KBM-7 (cell line): ENCODE measurements at regions of chr12 and their contacts with region 1.

Region 1: GRCh38 chr12:1939801-1940607 is 21.6 kb upstream of the CACNA2D4 start:
- DNase-seq: peak; percentile 90

Region 2: DNA sequence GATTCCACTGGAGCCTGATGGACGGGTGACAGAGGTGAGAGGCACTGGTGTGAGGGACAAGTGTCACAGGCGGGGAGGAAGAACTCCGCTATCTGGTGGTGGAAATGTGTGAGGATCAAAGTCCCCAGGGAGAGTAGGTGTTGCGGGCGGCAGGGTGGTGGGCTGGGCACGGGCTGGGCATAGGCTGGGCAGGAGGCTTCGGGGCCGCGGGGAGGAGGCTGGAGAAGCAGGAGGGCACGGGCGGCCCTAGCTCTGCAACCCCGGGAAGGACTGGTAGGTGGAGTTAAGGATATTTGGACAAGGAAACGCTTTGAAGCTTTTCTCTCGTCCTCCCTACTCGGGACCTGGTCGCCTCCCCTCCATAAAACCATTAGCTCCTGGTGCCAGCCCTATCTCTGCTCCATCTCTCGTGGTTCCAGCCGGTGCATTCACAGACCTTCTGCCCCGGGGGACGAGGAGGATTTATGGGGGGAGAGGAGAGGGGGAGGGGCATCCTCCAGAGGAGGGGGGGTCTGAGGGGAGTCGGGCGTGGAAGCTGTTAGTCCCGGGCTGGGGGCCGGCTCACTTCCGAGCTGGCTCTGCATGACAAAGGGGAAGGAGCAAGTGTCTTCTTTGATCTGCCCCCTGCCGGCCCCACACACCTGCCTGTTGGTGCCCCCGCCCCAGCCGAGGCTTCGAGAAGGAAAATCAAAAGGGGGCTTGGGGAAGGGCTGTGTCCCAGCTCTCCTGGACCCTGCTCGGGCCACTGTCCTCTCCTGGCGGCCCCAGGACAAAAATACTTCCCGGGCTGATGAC is 310.5 kb before region 1 on chr12:
- in situ Hi-C with region 1: loop called (anchors 10 kb)
- DNase-seq: no peak

Region 3: DNA sequence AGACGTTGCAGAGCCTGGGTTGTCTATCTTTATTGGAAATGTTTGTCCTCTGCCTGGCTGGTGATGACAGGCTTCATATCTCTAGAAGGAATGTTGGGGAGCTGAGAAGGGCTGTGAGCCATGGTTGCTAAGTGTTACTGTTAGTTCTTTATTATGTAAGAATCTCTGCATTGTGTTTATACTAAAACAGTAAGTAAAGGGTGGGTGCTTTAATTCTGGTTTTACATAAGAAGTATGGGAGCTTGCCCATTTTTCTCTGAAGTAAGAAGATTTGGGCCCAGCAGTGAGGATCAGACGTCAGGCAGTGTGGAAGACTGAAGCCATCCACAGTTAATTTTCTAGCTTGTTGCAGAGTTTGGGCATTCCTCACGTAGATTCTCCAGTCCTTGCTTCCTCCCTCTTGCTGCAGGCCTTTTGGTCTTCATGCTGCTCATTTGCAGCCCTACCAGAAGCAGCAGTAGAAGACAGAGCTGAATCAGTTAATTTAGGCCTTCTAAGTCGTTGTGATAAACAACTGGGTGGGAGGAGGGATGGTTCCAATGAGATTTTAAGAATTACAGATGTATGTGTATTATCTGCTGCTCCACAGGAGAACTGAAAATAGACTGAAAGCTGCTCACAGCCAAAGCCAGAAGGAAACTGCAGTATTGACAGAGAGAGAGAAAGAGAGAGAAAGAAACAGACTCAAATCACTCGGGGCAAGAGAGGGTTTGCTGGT is 289.6 kb before region 1 on chr12:
- in situ Hi-C with region 1: loop called (anchors 10 kb)
- DNase-seq: no peak

Region 4: DNA sequence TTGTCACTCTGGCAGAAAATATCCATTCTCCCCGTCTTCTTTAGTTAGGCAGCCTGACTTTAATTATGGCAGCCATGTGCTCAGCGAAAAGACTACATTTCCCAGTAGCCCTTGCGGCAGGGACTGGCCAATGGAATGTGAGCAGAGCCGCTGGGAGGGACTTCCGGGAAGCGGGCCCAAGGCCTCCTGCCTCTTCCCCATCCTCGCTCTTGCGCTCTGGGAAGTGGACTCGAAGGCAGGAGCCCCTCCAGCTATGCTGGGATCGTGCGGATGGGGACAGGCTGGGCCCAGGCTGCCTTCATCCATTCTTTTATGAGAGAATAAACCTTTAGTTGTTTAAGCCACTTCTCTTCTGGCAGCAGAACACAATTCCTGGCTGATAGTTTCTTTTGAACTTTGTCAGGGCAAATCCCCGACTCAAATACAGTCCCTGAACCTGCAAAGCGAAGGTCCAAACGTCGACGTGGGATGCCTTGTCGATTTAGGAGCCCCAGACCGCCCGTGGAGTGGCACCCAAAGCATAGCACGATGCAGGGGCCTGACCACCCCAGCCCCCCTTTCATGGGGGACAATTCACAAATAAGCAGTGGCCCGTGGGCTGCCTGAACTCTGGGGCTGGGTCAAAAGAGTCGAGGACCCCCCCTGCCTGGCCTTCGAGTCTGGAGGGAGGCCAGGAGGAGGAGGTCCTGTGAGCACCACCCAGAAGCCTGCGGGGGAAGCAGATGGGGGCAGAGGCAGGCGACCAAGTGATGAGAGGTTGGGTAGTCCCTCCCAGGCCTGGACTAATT is 135.3 kb before region 1 on chr12:
- in situ Hi-C with region 1: loop called (anchors 10 kb)
- DNase-seq: peak; percentile 89